ENCODE measurements at regions of chr12 and their contacts with region 1.

Region 1: GRCh38 chr12:55700255-55701018 is 7.3 kb downstream of the ITGA7 start:
- DNase-seq: peak in 1 of 2 donors; percentile 89
- ATAC-seq: peak in 1 of 2 donors; percentile 36
- H3K4me3 ChIP-seq: peak overlapping the region in 1 of 4 donors; percentile 12
- H3K27ac ChIP-seq: peak overlapping the region; percentile 87 to 96 (median 92)
- H3K4me1 ChIP-seq: peaks cover 54 to 56% of the 10 kb centered on the region in 2 donors
- H3K27me3 ChIP-seq: no peaks in the 10 kb centered on the region
- CTCF ChIP-seq: no peak
- POLR2A ChIP-seq: no peak

Region 2: DNA sequence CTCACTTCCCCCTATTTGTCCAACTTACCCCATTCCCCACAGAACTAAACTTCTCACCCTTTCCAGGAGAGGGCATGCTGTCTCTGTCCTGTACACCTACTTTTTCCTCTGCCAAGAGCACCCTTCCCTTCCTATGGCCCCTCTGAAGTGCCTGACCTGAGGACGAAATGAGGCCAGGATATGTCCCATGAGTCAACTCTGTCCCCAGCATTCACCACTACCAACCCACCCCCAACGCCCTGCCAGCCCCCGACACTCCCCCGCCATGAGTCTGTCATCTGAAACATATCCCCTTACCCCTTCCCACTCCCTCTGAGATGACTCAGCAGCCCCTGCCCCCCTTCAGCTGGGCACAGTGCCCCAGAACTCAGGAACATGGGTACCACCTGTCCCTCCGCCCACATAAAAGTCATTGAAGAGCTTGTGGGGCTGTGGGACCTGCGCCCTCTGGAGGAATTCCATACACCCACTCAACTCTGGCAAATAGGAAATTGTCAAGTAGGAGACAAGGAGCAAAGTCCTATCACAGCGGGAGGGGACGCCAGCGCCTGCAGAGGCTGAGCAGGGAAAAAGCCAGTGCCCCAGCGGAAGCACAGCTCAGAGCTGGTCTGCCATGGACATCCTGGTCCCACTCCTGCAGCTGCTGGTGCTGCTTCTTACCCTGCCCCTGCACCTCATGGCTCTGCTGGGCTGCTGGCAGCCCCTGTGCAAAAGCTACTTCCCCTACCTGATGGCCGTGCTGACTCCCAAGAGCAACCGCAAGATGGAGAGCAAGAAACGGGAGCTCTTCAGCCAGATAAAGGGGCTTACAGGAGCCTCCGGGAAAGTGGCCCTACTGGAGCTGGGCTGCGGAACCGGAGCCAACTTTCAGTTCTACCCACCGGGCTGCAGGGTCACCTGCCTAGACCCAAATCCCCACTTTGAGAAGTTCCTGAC is 19.0 kb before region 1 on chr12:
- in situ Hi-C with region 1: no loop called
- intact Hi-C with region 1: loop called (anchors 1 kb)
- DNase-seq: peak; percentile 63 to 85
- ATAC-seq: peak; percentile 93 to 94
- H3K4me3 ChIP-seq: peak overlapping the region; percentile 33 to 56 (median 40)
- H3K27ac ChIP-seq: peak overlapping the region; percentile 68 to 87 (median 80)
- H3K4me1 ChIP-seq: peaks cover 7 to 17% of the 10 kb centered on the region in 2 donors
- H3K27me3 ChIP-seq: no peaks in the 10 kb centered on the region
- CTCF ChIP-seq: peak; percentile 21 to 57 (median 53)
- POLR2A ChIP-seq: peak in 1 of 2 donors; percentile 39

Region 3: GRCh38 chr12:55686366-55687010 is 13.9 kb before region 1 on chr12:
- in situ Hi-C with region 1: no loop called
- intact Hi-C with region 1: loop called (anchors 1 kb)
- DNase-seq: no peak
- ATAC-seq: no peak
- H3K4me3 ChIP-seq: no peak overlapping the region
- H3K27ac ChIP-seq: no peak overlapping the region
- H3K4me1 ChIP-seq: peaks cover 4 to 10% of the 10 kb centered on the region in 2 donors
- H3K27me3 ChIP-seq: no peaks in the 10 kb centered on the region
- CTCF ChIP-seq: no peak
- POLR2A ChIP-seq: no peak

Region 4: GRCh38 chr12:55797068-55797467 is 96.6 kb after region 1 on chr12:
- in situ Hi-C with region 1: no loop called
- intact Hi-C with region 1: no loop called
- DNase-seq: no peak
- ATAC-seq: no peak
- H3K4me3 ChIP-seq: no peak overlapping the region
- H3K27ac ChIP-seq: no peak overlapping the region
- H3K4me1 ChIP-seq: no peaks in the 10 kb centered on the region
- H3K27me3 ChIP-seq: no peaks in the 10 kb centered on the region
- CTCF ChIP-seq: peak in 4 of 5 experiments; percentile 6 to 38 (median 22)
- POLR2A ChIP-seq: no peak

Region 5: DNA sequence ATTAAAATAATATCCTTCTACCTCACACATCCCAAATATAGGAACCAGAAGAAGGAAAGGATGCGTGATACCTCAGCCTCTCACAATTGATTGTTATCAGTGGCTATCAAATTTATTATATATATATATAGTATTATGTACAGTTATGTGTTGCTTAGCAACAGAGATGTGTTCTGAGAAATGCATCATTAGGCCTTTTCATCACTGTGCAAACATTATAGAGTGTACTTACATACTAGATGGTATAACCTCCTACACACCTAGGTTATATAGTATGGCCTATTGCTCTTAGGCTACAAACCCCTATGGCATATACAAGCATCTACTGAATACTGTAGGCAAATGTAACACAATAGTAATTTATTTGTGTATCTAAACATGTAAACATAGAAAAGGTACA is 193.3 kb after region 1 on chr12:
- in situ Hi-C with region 1: no loop called
- intact Hi-C with region 1: no loop called
- DNase-seq: no peak
- ATAC-seq: no peak
- H3K4me3 ChIP-seq: no peak overlapping the region
- H3K27ac ChIP-seq: no peak overlapping the region
- H3K4me1 ChIP-seq: no peaks in the 10 kb centered on the region
- H3K27me3 ChIP-seq: no peaks in the 10 kb centered on the region
- CTCF ChIP-seq: no peak
- POLR2A ChIP-seq: no peak